ENCODE measurements at regions of chr10 and their contacts with region 1.

Region 1: GRCh38 chr10:70549962-70550458 is 52.5 kb downstream of the PRF1 start:
- DNase-seq: peak; percentile 77
- H3K4me3 Mint-ChIP-seq: no peak overlapping the region
- H3K27ac Mint-ChIP-seq: peak overlapping the region; percentile 7
- H3K4me1 Mint-ChIP-seq: no peaks in the 10 kb centered on the region
- H3K27me3 Mint-ChIP-seq: peaks cover 5% of the 10 kb centered on the region

Region 2: DNA sequence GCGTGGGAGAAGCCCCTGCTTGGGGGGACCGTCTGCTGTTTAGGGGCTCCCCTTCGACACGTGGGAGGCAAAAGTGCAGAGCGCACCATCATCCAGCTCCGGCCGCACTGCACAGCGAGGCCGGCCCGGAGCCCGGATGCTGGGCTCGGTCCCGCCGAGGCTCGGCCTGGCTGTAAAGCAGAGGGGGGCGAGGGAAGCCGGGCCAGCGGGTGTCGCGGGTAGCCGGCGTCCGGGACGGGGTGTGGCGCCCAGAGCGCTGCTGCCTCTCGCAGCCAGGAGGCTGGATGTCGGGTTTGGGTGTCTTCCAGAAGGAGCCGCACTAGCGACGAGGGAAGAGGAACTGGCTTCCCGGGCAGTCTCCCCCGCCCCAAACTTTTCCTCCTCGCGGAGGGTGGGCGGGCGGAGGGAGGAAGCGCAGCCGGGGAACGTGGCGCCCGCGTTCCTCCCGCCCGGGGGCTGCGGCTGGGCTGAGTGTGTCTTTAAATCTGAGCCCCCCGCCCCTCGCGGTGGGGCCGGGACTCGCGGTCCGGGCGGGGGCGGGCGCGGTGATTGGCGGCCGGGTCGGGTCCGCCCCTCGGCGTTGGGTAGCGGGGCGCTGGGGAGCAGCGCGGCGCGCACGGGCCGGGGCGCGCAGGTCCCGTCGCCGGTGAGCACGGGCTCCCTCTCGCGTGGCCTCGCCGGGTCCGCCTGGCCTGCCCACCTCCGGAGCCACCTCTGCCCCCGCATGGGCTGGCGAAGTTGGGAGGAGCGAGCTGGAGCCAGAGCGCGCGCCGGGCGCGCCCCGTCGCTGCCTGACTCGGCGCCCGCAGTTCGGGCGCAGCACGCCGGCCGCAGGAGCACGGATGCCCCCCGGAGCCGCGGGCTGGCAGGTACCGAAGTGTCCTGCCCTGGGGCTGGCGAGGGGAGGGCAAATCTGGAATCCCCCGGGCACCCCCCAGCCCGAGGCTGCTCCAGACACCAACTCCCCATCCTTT is 71.5 kb before region 1 on chr10 and contains the start of gene PALD1:
- CTCF ChIA-PET with region 1: no interaction called
- POLR2A ChIA-PET with region 1: no interaction called
- DNase-seq: peak; percentile 32
- H3K4me3 Mint-ChIP-seq: peak within 1 kb of the TSS; percentile 63
- H3K27ac Mint-ChIP-seq: no peak within 1 kb of the TSS
- H3K4me1 Mint-ChIP-seq: peaks cover 32% of the 10 kb centered on the region
- H3K27me3 Mint-ChIP-seq: peaks cover 62% of the 10 kb centered on the region
- total RNA-seq, gene PALD1: 0.08 to 0.15 TPM

Region 3: DNA sequence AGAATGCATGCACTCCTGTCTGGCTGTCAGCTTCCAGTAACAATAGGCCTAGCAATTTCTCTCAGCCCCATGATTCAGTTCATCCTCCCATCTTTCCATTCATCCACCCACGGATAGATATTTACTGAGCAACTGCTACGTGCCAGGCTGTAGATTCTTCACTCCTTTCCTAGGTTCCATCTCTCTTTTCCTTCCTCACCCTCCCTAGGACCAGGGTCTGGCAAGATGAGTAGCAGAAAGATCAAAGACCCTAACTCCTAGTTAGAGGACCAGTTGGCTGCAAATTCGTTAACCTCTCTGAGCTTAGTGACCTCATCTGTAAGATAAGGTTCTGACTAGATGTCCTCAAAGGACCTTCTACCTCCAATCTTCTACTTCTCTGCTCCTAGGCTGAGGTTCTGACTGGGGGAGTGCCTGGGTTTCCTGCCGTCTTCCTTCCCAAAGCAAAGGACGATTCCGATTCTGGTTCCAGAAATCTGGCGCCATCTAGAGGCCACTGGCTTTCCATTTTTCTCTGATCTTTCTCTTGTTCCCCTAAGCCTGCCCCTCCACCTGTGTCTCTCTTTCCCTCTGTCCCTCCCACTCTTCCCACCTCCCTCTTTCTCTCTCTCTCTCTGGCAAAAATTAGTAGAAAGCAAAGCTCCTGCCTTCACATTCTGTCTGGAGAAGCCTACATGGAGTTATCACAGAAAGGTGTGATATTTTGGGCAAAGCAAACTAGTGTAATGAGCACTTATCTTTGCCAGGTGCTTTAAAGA is 208.9 kb after region 1 on chr10:
- CTCF ChIA-PET with region 1: interaction called, 19 read pairs
- POLR2A ChIA-PET with region 1: no interaction called
- DNase-seq: peak; percentile 69
- H3K4me3 Mint-ChIP-seq: no peak overlapping the region
- H3K27ac Mint-ChIP-seq: no peak overlapping the region
- H3K4me1 Mint-ChIP-seq: peaks cover 8% of the 10 kb centered on the region
- H3K27me3 Mint-ChIP-seq: peaks cover 3% of the 10 kb centered on the region

Measured in activated CD4-positive, alpha-beta memory T cell treated with anti-CD3 and anti-CD28 coated beads, Interleukin-2, amount 10 ng/mL, durations not matched to agents 7 days and 5 days (primary cell).